ENCODE measurements at regions of chr1 and their contacts with region 1.

Region 1: GRCh38 chr1:110674337-110675059 is at the start of gene KCNA3:
- DNase-seq: peak; percentile 70 to 87 (median 73)
- H3K4me3 ChIP-seq: peak within 1 kb of the TSS; percentile 90
- H3K4me3 Mint-ChIP-seq: peak within 1 kb of the TSS; percentile 96 to 100 (median 100)
- H3K27ac ChIP-seq: peak within 1 kb of the TSS; percentile 98
- H3K27ac Mint-ChIP-seq: peak within 1 kb of the TSS; percentile 93 to 100 (median 100)
- H3K4me1 ChIP-seq: peaks cover 24% of the 10 kb centered on the region
- H3K4me1 Mint-ChIP-seq: peaks cover 33 to 60% (median 43%) of the 10 kb centered on the region in 3 donors
- H3K27me3 ChIP-seq: no peaks in the 10 kb centered on the region
- H3K27me3 Mint-ChIP-seq: peaks cover 0 to 11% of the 10 kb centered on the region in 2 donors
- total RNA-seq, gene KCNA3: 38.4 to 40.5 TPM

Region 2: DNA sequence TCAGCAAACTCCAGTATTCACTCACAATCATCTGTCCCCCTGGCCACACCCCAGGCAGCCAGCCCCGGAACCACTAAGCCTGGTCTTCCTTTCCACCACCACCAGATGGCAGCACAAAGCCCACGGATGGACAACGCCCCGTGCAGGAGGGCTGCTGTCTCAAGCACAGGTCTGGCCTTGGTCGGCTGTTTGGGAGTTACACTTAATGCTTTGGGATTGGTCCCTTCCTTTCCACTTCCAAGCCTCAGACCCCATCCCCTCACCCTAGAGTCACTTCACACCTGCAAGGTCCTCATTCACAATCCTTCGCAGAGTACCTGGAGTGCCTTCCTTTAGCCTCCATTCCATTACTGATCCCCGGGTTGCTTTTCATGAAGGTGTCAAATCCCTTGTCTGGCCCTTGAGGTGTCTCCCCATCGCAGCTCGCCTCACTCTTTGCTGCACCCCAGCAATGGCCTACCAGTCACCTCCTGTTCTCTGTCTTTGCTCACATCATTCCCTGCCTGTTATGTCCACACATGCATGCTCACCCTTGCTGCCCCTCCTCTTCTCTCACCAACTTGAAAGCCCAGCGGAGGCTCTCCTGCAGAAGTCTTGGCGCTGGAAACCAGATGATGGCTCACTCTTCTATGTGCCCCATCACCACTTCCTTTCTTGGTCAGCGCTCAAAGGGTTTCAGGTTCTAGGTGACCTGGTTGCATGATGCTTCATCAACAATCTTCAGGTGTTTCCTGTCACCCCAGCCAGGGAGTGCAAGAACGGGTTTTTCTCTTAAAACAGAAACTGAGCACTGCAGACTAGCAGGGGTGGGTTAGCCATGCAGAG is 43.4 kb before region 1 on chr1:
- CTCF ChIA-PET with region 1: interaction called, 34 read pairs
- POLR2A ChIA-PET with region 1: interaction called, 8 read pairs
- DNase-seq: peak; percentile 76 to 89 (median 83)
- H3K4me3 ChIP-seq: peak overlapping the region; percentile 45
- H3K4me3 Mint-ChIP-seq: no peak overlapping the region
- H3K27ac ChIP-seq: peak overlapping the region; percentile 22
- H3K27ac Mint-ChIP-seq: no peak overlapping the region
- H3K4me1 ChIP-seq: peaks cover 59% of the 10 kb centered on the region
- H3K4me1 Mint-ChIP-seq: peaks cover 34 to 66% (median 40%) of the 10 kb centered on the region in 3 donors
- H3K27me3 ChIP-seq: no peaks in the 10 kb centered on the region
- H3K27me3 Mint-ChIP-seq: no peaks in the 10 kb centered on the region

Region 3: GRCh38 chr1:110636149-110636935 is 38.2 kb before region 1 on chr1:
- CTCF ChIA-PET with region 1: interaction called, 34 read pairs
- POLR2A ChIA-PET with region 1: interaction called, 8 read pairs
- DNase-seq: peak in 2 of 5 donors; percentile 30 to 36
- H3K4me3 ChIP-seq: peak overlapping the region; percentile 26
- H3K4me3 Mint-ChIP-seq: peak overlapping the region; percentile 63 to 85 (median 78)
- H3K27ac ChIP-seq: no peak overlapping the region
- H3K27ac Mint-ChIP-seq: peak overlapping the region in 6 of 8 donors; percentile 92 to 98 (median 94)
- H3K4me1 ChIP-seq: peaks cover 98% of the 10 kb centered on the region
- H3K4me1 Mint-ChIP-seq: peaks cover 40 to 84% (median 80%) of the 10 kb centered on the region in 3 donors
- H3K27me3 ChIP-seq: no peaks in the 10 kb centered on the region
- H3K27me3 Mint-ChIP-seq: no peaks in the 10 kb centered on the region

Region 4: GRCh38 chr1:110645821-110646735 is 28.4 kb before region 1 on chr1:
- CTCF ChIA-PET with region 1: interaction called, 11 read pairs
- POLR2A ChIA-PET with region 1: interaction called, 5 read pairs
- DNase-seq: no peak
- H3K4me3 ChIP-seq: peak overlapping the region; percentile 6
- H3K4me3 Mint-ChIP-seq: peak overlapping the region in 6 of 7 donors; percentile 7 to 56 (median 37)
- H3K27ac ChIP-seq: no peak overlapping the region
- H3K27ac Mint-ChIP-seq: peak overlapping the region in 6 of 8 donors; percentile 8 to 91 (median 74)
- H3K4me1 ChIP-seq: peaks cover 92% of the 10 kb centered on the region
- H3K4me1 Mint-ChIP-seq: peaks cover 33 to 48% (median 41%) of the 10 kb centered on the region in 3 donors
- H3K27me3 ChIP-seq: no peaks in the 10 kb centered on the region
- H3K27me3 Mint-ChIP-seq: no peaks in the 10 kb centered on the region

Region 5: GRCh38 chr1:110700767-110701166 is 26.3 kb after region 1 on chr1:
- CTCF ChIA-PET with region 1: no interaction called
- POLR2A ChIA-PET with region 1: no interaction called
- DNase-seq: no peak
- H3K4me3 ChIP-seq: no peak overlapping the region
- H3K4me3 Mint-ChIP-seq: no peak overlapping the region
- H3K27ac ChIP-seq: no peak overlapping the region
- H3K27ac Mint-ChIP-seq: no peak overlapping the region
- H3K4me1 ChIP-seq: no peaks in the 10 kb centered on the region
- H3K4me1 Mint-ChIP-seq: no peaks in the 10 kb centered on the region
- H3K27me3 ChIP-seq: no peaks in the 10 kb centered on the region
- H3K27me3 Mint-ChIP-seq: peaks cover 0 to 2% of the 10 kb centered on the region in 2 donors

Region 6: DNA sequence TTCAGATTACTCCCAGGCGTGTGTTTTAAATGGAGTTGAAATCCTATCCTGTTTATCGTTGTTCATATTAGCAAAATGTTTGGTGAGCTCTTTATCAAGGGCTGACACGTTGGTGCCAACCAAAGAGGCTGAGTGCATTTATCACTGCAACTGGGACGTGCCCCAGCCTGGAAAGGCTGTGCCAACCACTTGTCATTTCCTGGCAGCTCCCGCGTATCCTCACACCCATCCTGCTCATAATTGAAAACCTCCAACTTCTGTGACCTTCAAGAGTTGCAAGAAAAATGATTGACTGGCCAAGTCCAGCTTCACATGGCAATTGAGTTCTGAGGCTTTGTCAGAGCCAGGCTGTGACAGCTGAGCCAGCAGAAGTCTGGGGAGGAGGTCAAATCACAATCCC is 44.0 kb after region 1 on chr1:
- CTCF ChIA-PET with region 1: no interaction called
- POLR2A ChIA-PET with region 1: no interaction called
- DNase-seq: no peak
- H3K4me3 ChIP-seq: no peak overlapping the region
- H3K4me3 Mint-ChIP-seq: no peak overlapping the region
- H3K27ac ChIP-seq: no peak overlapping the region
- H3K27ac Mint-ChIP-seq: peak overlapping the region in 1 of 8 donors; percentile 9
- H3K4me1 ChIP-seq: no peaks in the 10 kb centered on the region
- H3K4me1 Mint-ChIP-seq: no peaks in the 10 kb centered on the region
- H3K27me3 ChIP-seq: peaks cover 5% of the 10 kb centered on the region
- H3K27me3 Mint-ChIP-seq: peaks cover 5 to 7% of the 10 kb centered on the region in 2 donors

Measured in CD8-positive, alpha-beta memory T cell (primary cell).